Lower lobe of right lung (tissue), 2 donors: ENCODE measurements at regions of chr3 and their contacts with region 1.

Region 1: DNA sequence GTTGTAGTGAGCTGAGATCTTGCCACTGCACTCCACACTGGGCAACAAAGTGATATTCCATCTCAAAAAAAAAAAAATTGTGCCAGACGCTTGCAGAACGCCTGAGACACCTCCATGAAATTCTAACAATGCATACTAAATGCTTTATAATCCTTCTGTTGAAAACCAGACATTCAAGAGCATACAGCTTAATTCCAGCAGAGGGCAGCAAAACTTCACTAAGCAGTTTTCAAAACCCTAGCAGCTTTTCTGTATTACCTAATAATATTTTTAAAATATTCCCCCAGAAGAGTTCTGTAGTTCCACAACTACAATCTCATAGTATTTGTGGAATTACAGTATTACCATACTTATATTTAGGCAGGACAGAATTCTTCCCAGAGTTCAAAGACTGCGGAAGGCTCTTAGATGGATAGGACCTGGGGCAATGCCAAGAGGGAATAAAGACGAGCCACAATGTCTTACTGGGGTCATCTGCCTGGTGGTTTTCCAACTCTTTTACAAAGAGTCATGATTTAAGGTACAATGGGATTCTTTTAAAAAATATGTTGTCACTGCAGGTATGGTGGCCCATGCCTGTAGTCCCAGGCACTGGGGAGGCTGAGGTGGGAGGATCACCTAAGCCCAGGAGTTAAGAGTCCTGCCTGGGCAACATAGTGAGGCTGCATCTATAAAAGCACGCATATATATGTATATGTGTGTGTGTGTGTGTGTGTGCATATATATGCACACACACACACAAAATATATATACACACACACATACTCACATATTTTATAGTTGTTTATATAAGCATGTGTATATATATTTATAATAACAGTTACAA is 19.6 kb upstream of the TASOR start:
- DNase-seq: no peak
- ATAC-seq: peak; percentile 75 to 85
- H3K4me3 ChIP-seq: no peak overlapping the region
- H3K27ac ChIP-seq: no peak overlapping the region
- H3K4me1 ChIP-seq: peaks cover 3% of the 10 kb centered on the region
- H3K27me3 ChIP-seq: no peaks in the 10 kb centered on the region
- CTCF ChIP-seq: peak; percentile 88

Region 2: DNA sequence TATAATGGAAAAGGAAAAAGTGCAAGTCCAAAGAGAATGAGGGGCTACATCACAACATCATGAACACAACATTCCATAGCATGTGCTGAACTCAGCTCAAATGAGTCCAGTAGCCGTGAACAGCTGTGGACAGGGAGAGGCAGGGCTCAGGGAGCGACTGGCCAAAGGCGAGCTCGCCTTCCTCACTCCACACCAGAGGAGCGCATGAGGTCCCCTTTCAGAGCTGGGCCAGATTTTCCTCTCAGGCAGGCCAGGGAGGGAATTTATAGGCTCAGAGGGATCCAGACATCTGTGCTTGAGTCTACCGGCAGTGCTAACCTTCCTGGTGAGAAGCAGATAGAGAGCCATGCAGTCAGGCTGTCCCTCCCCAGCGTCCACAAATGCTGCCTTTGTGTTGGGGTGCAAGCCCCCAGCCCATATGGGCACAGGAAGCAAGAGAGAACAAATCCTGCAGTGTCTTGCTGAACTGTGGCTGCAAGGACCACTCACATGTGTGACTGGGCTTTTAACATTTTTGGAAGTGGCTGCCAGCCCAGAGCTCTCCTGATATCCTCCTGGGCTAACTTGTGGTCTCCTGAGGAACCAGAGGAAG is 66.5 kb after region 1 on chr3:
- intact Hi-C with region 1: no loop called
- DNase-seq: no peak
- ATAC-seq: peak in 1 of 2 donors; percentile 17
- H3K4me3 ChIP-seq: no peak overlapping the region
- H3K27ac ChIP-seq: no peak overlapping the region
- H3K4me1 ChIP-seq: peaks cover 16% of the 10 kb centered on the region
- H3K27me3 ChIP-seq: no peaks in the 10 kb centered on the region
- CTCF ChIP-seq: no peak

Region 3: DNA sequence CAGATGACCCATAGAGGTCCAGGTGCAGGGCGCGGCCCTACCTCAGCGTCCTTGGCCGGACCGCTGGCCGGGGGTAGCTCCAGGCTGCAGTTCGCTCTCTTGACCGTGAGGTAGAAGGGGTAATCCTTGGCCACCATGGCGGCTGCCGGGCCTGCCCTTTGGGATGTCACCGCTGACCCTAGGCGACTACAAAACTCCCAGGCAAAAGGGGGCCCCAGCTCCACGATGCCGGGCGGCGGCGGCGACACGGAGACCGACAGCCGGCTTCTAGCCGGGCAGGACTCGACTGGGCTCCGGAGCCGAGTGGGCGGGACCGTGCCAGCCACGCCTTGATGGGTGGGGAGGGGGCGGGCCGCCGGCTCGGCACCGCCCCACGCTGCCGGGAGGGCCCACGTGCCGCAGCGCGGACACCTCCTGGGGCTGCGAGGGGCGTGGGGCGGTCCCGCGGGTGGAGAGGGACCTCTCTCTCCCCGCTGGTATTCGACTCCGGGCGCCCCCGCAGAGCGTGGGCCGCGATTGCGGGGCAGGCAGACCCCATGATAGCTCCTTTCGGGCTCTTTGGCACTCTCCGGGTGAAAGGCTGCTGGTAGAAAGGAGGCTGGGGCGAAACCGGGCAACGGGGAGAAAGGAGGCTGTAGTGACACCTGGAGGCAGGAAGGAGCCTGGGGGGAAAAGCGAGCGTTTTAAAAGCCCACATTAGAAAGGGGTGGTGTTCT is 99.1 kb after region 1 on chr3 and contains the start of gene ARHGEF3:
- intact Hi-C with region 1: loop called (anchors 5 kb)
- DNase-seq: peak; percentile 89
- ATAC-seq: peak; percentile 97
- H3K4me3 ChIP-seq: peak within 1 kb of the TSS; percentile 89
- H3K27ac ChIP-seq: peak within 1 kb of the TSS; percentile 77
- H3K4me1 ChIP-seq: peaks cover 36% of the 10 kb centered on the region
- H3K27me3 ChIP-seq: no peaks in the 10 kb centered on the region
- CTCF ChIP-seq: peak; percentile 50
- total RNA-seq, gene ARHGEF3: 48.0 TPM

Region 4: DNA sequence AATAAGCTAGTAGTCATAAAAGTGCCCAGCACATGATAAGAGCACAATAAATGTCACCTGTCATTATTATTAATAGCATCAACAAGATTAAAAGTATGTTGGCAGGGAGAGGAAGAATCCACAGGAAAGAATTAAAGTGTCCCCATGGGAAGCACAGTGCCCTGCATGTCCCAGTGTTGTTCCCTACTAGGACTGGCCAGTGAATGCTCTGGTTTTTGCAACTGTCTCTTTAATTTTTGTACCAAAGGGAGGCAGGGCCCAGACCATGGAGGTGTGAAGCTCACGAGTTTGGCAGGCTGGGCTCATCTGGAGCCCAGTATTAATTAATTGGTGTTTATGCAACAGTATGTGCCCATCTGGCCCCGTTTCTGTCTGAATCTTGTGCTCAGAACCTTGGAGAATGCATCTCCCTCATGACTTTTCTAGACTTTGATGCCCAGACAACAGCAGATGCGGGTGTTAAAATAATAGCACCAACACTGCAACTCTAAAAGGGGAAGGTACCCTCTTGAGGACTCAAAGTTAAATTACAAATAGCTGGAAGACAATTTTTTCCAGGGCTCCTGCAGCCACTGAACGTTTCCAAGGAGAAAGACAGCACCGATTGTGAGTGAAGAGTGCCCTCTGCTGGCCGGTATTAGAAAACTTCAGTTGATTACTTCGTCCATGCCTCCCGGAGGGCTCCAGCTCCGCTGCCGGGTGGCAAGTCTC is 285.9 kb after region 1 on chr3:
- intact Hi-C with region 1: loop called (anchors 5 kb)
- DNase-seq: peak; percentile 60
- ATAC-seq: peak; percentile 85 to 90
- H3K4me3 ChIP-seq: no peak overlapping the region
- H3K27ac ChIP-seq: peak overlapping the region; percentile 2
- H3K4me1 ChIP-seq: peaks cover 10% of the 10 kb centered on the region
- H3K27me3 ChIP-seq: no peaks in the 10 kb centered on the region
- CTCF ChIP-seq: peak; percentile 87